Naive thymus-derived CD4-positive, alpha-beta T cell (primary cell): ENCODE measurements at regions of chr4 and their contacts with region 1.

Region 1: DNA sequence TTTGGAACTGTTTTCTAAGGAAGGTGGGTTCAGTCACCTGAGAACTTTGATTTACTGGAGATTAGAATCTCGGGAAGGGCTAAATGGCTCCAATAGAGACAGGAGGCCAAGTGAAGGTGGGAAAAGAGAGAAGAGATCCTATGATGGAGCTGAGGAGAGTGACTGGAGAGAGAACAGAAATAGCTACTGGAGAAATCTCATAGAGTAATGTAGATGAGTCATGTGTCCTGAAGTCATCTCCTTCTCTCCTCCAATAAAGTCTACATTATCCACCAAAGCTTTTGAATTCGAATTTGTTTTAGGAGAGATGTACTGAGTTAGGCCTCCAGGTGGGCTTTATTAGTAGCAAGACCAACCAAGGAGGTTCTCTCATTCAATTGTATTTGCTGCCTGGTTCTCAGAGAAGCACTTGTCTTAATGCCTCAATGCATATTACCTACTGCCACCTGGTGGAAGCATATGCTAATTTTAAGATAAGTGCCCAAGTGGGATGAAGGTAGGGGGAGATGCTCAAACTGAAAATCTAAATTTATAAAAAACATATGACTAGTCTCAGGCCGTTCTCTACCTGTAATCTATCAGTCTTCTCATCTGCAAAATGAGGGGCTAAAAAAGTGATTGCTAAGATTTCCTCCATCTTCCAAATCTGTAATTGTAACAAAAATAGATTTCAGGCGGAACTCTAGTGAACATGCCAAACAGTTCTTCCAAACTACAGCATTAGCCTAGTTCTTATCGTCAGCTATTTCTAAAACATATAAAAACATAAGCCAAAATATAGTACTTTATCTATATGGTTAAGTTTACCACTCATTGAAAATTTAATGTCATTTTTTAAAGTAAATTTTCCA is 24.4 kb downstream of the TXK start:
- DNase-seq: peak in 7 of 9 donors; percentile 19 to 61 (median 49)
- ATAC-seq: peak; percentile 82
- H3K4me3 ChIP-seq: no peak overlapping the region
- H3K4me3 Mint-ChIP-seq: no peak overlapping the region
- H3K27ac ChIP-seq: no peak overlapping the region
- H3K27ac Mint-ChIP-seq: peak overlapping the region in 8 of 9 donors; percentile 0 to 80 (median 58)
- H3K4me1 ChIP-seq: peaks cover 0 to 19% of the 10 kb centered on the region in 2 donors
- H3K4me1 Mint-ChIP-seq: peaks cover 35 to 72% (median 56%) of the 10 kb centered on the region in 7 donors
- H3K27me3 ChIP-seq: no peaks in the 10 kb centered on the region
- H3K27me3 Mint-ChIP-seq: no peaks in the 10 kb centered on the region

Region 2: GRCh38 chr4:48008021-48008596 is 101.5 kb before region 1 on chr4:
- CTCF ChIA-PET with region 1: interaction called, 4 read pairs
- POLR2A ChIA-PET with region 1: no interaction called
- intact Hi-C with region 1: loop called in 1 of 2 experiments (anchors 1 kb)
- DNase-seq: no peak
- ATAC-seq: no peak
- H3K4me3 ChIP-seq: no peak overlapping the region
- H3K4me3 Mint-ChIP-seq: no peak overlapping the region
- H3K27ac ChIP-seq: no peak overlapping the region
- H3K27ac Mint-ChIP-seq: no peak overlapping the region
- H3K4me1 ChIP-seq: no peaks in the 10 kb centered on the region
- H3K4me1 Mint-ChIP-seq: no peaks in the 10 kb centered on the region
- H3K27me3 ChIP-seq: no peaks in the 10 kb centered on the region
- H3K27me3 Mint-ChIP-seq: peaks cover 0 to 14% (median 5%) of the 10 kb centered on the region in 5 donors

Region 3: DNA sequence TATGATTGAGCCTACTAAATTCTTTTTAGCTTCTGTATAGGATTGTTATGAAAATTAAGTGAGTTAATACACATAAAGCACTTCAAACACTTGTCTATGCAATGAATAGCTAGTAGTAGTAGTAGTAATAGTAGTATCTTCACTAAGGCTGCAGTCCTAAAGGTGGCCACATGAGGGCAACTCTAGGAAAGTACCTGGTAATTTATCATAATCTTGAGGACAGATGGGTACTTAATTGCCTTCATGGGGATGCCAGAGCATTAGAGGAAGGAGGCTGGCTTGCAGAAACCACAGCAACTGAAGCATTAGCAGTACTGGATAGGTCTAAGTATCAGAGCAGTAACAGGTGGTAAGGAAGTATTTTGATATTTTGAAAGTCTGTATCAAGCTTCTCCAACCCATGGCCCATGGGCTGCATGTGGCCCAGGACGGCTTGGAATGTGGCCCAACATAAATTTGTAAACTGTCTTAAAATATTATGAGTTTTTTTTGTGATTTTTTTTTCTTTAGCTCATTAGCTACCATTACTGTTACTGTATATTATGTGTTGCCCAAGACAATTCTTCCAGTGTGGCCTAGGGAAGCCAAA is 75.7 kb before region 1 on chr4:
- CTCF ChIA-PET with region 1: no interaction called
- POLR2A ChIA-PET with region 1: no interaction called
- intact Hi-C with region 1: loop called in 1 of 2 experiments (anchors 1 kb)
- DNase-seq: peak in 7 of 9 donors; percentile 21 to 55 (median 52)
- ATAC-seq: peak; percentile 91
- H3K4me3 ChIP-seq: no peak overlapping the region
- H3K4me3 Mint-ChIP-seq: no peak overlapping the region
- H3K27ac ChIP-seq: no peak overlapping the region
- H3K27ac Mint-ChIP-seq: no peak overlapping the region
- H3K4me1 ChIP-seq: peaks cover 3 to 4% of the 10 kb centered on the region in 2 donors
- H3K4me1 Mint-ChIP-seq: peaks cover 4 to 22% (median 15%) of the 10 kb centered on the region in 7 donors
- H3K27me3 ChIP-seq: no peaks in the 10 kb centered on the region
- H3K27me3 Mint-ChIP-seq: no peaks in the 10 kb centered on the region

Region 4: GRCh38 chr4:48093949-48094550 is 15.6 kb before region 1 on chr4:
- CTCF ChIA-PET with region 1: interaction called, 7 read pairs
- POLR2A ChIA-PET with region 1: interaction called, 3 read pairs
- intact Hi-C with region 1: loop called in 1 of 2 experiments (anchors 2 kb)
- DNase-seq: no peak
- ATAC-seq: no peak
- H3K4me3 ChIP-seq: no peak overlapping the region
- H3K4me3 Mint-ChIP-seq: no peak overlapping the region
- H3K27ac ChIP-seq: no peak overlapping the region
- H3K27ac Mint-ChIP-seq: peak overlapping the region in 4 of 9 donors; percentile 8 to 69 (median 54)
- H3K4me1 ChIP-seq: no peaks in the 10 kb centered on the region
- H3K4me1 Mint-ChIP-seq: peaks cover 0 to 17% (median 6%) of the 10 kb centered on the region in 7 donors
- H3K27me3 ChIP-seq: no peaks in the 10 kb centered on the region
- H3K27me3 Mint-ChIP-seq: no peaks in the 10 kb centered on the region